Calu3 (cell line): ENCODE measurements at regions of chr12 and their contacts with region 1.

Region 1: DNA sequence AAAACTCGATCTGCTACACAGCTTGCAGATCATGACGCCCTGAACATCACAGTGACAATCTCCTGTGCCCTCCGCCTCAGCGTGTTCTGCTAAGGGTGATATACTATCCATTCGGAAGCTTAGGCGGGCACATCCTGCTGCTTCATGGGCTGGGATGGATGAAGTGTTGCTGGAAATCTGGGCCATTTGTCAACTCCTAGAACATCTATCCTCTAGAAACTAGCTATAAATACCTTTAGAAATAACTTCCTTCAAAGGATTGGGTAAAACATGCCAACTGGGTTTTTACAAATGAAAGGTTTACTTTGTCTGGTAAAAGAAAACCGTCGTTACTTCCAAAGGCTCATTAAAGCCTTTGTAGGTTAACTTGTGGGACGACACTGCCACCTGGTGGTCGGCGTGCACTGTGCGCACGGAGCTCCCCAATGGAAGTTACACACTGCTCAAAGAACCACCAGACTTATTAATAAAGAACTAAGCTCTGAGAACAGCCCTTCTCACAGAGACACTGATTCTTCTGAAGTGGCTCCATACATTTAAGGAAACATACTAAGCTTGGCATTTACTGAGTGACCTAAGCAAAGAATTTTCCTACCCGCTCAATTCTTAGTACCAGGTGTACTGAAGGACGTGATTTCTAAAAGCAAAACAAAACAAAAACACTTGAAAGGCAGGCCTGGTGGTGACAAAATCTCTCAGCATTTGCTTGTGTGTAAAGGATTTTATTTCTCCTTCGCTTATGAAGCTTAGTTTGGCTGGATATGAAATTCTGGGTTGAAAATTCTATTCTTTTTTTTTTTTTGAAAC is 21.6 kb upstream of the CACNA2D4 start:
- DNase-seq: peak; percentile 88
- H3K4me3 Mint-ChIP-seq: no peak overlapping the region
- H3K27ac Mint-ChIP-seq: no peak overlapping the region
- H3K4me1 Mint-ChIP-seq: peaks cover 8% of the 10 kb centered on the region
- H3K27me3 Mint-ChIP-seq: peaks cover 15% of the 10 kb centered on the region
- CTCF ChIP-seq: peak; percentile 88

Region 2: GRCh38 chr12:1634590-1635191 is 305.3 kb before region 1 on chr12:
- CTCF ChIA-PET with region 1: interaction called, 10 read pairs
- intact Hi-C with region 1: loop called (anchors 1 kb)
- DNase-seq: peak; percentile 74
- H3K4me3 Mint-ChIP-seq: no peak overlapping the region
- H3K27ac Mint-ChIP-seq: no peak overlapping the region
- H3K4me1 Mint-ChIP-seq: no peaks in the 10 kb centered on the region
- H3K27me3 Mint-ChIP-seq: peaks cover 89% of the 10 kb centered on the region
- CTCF ChIP-seq: peak; percentile 74

Region 3: DNA sequence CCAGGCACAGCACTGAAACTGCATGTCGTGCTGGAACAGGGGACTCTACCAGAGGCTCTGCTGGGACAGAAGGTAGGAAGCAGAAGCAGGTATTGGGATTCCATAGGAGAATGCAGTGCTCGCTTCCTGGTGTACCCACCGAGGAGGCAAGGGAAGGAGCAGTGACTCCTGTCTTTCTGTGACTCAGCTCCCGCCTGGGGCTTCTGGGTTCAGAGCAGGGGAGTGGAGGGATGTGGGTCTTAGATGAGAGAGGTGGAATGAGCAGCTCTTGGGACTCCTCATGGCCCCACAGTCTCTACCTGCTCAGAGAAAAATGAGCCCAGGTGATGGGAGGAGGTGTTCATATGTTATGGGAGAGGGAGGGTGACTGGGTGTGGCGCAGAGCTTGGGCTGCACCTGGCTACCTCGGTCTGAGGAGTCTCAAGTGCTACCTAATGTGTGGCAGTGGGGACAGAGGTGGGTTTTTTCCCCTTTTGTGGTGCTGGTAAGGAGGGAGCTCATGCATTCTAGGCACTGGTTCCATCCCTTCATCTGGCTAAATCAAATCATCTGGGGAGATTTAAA is 284.7 kb before region 1 on chr12:
- CTCF ChIA-PET with region 1: interaction called, 5 read pairs
- intact Hi-C with region 1: loop called (anchors 1 kb)
- DNase-seq: no peak
- H3K4me3 Mint-ChIP-seq: no peak overlapping the region
- H3K27ac Mint-ChIP-seq: no peak overlapping the region
- H3K4me1 Mint-ChIP-seq: peaks cover 6% of the 10 kb centered on the region
- H3K27me3 Mint-ChIP-seq: peaks cover 22% of the 10 kb centered on the region
- CTCF ChIP-seq: no peak

Region 4: GRCh38 chr12:2535583-2536204 is 595.7 kb after region 1 on chr12:
- CTCF ChIA-PET with region 1: no interaction called
- intact Hi-C with region 1: no loop called
- DNase-seq: no peak
- H3K4me3 Mint-ChIP-seq: no peak overlapping the region
- H3K27ac Mint-ChIP-seq: no peak overlapping the region
- H3K4me1 Mint-ChIP-seq: no peaks in the 10 kb centered on the region
- H3K27me3 Mint-ChIP-seq: peaks cover 46% of the 10 kb centered on the region
- CTCF ChIP-seq: no peak